AG04449 (cell line): ENCODE measurements at regions of chr11 and their contacts with region 1.

Region 1: DNA sequence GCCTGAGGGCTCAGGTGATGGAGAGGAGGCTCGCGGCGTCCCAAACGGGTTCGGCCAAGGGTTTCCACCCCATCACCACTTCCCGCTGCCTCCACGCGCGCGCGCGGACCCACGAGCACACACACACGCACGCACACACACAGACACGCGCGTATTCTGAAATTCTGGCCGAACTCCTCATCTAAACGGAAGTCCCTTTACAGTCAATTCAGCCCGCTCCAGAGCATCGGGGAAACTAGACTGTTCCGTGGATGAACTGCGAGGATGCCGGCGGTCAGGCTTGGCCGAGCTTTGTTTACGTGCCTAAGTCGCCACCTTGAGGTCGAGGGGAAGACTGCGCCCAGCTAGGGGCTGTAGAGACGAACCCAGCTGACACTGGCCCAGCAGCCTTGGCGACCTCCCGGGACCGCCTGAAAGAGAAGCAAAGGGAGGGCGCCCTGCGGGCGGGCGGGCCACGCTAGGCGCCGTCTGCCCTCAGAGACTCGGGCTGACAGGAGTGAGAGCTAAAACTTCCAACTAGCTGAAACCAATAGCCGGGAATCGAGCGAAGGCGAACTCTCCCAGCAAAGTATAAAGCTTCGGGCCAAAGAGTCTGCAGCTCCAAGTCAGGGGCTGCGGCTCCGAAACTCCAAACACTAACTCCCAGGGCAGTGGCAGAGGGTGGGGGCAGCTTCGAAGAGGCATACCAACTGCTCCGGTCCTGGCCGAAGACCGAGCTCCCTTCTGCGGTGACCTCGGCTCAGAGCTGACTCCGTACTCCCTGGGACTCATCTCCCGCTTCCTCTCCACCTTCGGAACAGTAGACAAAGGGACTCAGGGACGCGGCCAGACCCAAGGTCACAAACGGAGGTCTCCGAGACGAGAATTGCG is 124.7 kb upstream of the C11orf58 start:
- DNase-seq: no peak
- H3K4me3 ChIP-seq: peak overlapping the region; percentile 69
- CTCF ChIP-seq: peak; percentile 95

Region 2: DNA sequence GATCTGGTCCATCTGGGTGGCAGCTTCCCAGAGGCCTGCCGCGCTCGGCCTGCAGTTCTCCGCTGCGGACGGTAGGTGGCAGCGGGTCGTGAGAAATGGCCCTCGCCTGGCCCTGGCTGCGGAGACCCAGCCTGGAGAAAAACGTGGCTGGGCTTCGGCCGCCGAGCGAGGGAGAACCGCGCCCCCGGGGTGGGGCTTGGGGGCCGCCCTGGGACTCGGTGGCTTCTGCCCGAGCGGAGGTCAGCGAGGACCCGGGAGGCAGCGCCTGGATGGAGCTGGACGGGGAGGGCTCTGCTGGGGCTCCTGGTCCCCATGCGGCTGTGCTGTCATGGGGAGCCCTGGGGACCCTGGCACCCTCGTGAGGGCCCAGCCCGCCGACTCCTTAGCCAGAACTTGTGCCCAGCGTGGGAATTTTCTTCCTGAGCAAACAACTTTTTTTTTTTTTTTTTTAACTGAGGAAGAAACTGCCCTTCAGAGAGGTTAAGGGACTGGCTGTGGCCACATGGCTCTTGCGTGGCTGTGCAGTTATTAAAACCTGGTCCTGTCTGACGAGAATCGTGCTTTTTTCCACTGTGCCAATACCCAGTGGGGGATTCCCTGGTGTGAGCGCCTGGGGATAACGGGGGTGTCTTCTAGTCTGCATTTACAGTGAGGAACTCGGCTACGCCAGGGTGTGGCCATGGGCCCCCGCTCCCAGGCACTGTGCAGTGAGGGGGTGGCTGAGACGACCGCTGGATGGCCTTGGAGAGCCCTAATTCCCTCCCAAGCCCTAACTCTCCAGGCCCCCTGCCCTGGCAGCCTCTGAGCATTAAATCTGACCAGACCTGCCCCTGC is 963.4 kb before region 1 on chr11:
- CTCF ChIA-PET with region 1: interaction called, 62 read pairs
- POLR2A ChIA-PET with region 1: no interaction called
- DNase-seq: peak; percentile 26
- H3K4me3 ChIP-seq: peak overlapping the region; percentile 57
- CTCF ChIP-seq: peak; percentile 97

Region 3: GRCh38 chr11:15770798-15771414 is 842.8 kb before region 1 on chr11:
- CTCF ChIA-PET with region 1: interaction called, 54 read pairs
- POLR2A ChIA-PET with region 1: interaction called, 3 read pairs
- DNase-seq: no peak
- H3K4me3 ChIP-seq: no peak overlapping the region
- CTCF ChIP-seq: peak; percentile 75

Region 4: DNA sequence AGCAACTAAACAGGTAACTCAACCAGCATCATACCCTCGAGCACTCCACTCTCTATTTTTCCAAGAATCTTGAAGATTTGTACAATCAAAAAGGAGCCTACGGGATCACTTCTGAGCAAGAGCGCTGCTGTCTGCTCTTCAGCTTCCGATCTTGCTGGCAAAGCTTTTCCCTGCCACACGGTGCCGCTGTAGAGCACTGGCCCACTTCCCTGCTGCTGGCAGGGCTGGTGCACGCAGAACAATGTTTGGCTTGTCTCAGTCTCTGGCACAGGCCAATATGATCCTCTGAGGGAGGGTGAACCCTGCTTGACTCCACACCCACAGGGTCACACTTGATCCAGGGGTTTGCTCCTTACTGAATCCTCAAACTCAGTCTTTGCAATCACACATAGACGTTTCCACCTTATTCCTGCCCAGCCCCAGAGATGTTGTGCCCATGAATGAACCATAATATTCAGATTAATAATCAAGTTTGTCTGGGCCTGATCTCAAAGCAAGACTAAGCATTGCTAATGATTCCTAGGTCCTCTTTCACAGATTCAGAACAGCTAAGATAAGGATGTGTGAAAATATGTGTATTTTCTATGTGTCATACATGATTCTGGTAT is 794.0 kb before region 1 on chr11:
- CTCF ChIA-PET with region 1: interaction called, 12 read pairs
- POLR2A ChIA-PET with region 1: no interaction called
- DNase-seq: no peak
- H3K4me3 ChIP-seq: no peak overlapping the region
- CTCF ChIP-seq: peak; percentile 81

Region 5: GRCh38 chr11:15852179-15852578 is 761.6 kb before region 1 on chr11:
- CTCF ChIA-PET with region 1: interaction called, 18 read pairs
- POLR2A ChIA-PET with region 1: no interaction called
- DNase-seq: no peak
- H3K4me3 ChIP-seq: no peak overlapping the region
- CTCF ChIP-seq: peak; percentile 16

Region 6: GRCh38 chr11:15941201-15941770 is 672.5 kb before region 1 on chr11:
- CTCF ChIA-PET with region 1: interaction called, 39 read pairs
- POLR2A ChIA-PET with region 1: no interaction called
- DNase-seq: no peak
- H3K4me3 ChIP-seq: peak overlapping the region; percentile 8
- CTCF ChIP-seq: peak; percentile 95

Region 7: DNA sequence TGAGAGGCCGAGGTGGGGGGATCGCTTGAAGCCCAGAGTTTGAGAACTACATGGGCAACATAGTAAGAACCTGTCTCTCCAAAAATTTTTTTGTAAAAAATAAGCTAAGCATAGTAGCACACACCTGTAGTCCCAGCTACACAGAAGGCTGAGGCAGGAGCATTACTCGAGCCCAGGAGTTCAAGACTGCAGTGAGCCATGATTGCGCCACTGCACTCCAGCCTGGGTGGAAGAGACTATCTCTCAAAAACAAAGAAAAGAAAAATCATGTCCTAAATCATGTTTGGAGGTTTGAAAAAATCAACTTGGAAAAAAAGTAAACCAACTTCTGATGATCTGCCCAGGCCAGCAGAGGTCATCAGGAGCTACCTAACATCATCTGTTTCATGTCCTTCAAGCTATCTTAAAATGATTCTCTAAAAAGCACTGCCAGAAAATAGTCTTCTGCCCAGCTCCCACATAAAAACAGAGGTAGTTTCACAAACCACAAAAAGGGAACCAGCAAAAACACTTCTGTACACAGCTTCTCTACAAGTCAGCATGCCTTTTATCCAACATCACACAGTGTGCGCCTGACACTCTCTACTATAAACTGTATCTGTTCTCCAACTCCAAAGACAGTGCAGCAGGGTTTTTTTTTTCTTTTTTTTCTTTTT is 422.4 kb before region 1 on chr11:
- CTCF ChIA-PET with region 1: interaction called, 10 read pairs
- POLR2A ChIA-PET with region 1: no interaction called
- DNase-seq: no peak
- H3K4me3 ChIP-seq: no peak overlapping the region
- CTCF ChIP-seq: no peak

Region 8: DNA sequence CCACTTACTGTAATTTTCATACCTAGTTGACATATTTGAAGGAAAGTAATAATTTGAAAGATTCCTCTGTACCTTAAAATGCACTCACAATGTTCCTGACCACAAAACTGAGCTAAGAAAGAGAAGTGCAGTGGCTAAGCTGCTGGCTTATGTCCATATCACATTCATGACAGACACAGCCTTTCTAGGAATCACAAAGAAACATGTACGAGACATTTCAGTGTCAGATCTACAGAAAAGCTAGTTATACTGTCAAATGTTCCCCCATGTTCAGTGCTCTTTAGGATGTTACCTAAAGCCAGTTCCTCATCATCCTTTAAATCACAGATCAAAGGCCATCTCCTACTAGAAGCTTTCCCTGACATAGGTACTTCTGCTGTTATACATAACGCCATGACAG is 17.5 kb before region 1 on chr11:
- CTCF ChIA-PET with region 1: no interaction called
- POLR2A ChIA-PET with region 1: no interaction called
- DNase-seq: no peak
- H3K4me3 ChIP-seq: no peak overlapping the region
- CTCF ChIP-seq: no peak